ENCODE measurements at regions of chr1 and their contacts with region 1.

Region 1: DNA sequence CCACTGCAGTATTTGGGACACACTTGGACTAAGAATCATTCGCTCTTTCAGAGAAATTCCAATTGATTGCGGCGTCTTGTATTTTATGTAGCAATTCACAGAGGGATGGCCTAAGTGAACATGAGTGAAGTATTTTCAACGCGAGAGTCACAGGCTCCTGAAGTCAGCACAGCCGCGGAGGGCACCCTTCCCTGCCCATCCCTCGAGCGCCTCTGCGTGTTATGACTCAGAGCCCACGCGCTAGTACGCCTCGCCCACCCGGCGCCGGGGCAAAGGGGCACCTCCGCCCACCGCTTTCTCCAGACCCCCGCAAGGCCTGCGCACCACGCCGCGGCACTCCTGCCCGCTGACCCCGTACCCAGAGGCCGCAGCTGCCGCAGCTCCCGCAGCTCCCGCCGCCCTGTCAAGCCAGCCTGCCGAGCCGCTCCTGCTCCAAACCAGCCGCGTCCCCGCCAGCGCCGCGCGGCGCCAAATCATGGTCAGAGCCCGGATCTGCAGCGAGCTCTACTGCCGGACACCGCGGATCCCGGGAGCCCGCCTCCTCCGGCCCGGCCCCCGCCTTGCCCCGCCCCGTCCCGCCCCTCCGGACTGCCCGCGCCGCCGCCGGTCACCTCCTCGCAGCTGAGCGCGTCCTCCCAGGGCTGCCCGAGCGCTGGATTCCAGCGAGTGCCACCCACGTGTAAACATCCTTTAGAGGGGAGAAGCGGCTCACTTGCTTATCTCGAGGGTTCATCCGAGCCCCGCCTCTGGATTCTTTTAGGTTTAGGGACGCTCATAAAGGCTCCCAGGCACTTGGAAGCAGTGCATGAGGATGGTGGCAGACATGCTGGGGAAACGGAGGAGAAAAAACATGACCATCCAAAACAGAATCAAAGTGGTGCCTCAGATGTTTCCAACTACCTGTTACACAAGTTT is at the start of gene GLRX2:
- DNase-seq: peak; percentile 82 to 89 (median 86)
- H3K4me3 ChIP-seq: peak within 1 kb of the TSS; percentile 74
- H3K27ac ChIP-seq: peak within 1 kb of the TSS; percentile 70 to 88
- H3K4me1 ChIP-seq: peaks cover 2% of the 10 kb centered on the region
- H3K27me3 ChIP-seq: no peaks in the 10 kb centered on the region
- CTCF ChIP-seq: peak in 2 of 3 donors; percentile 15 to 24
- EP300 ChIP-seq: no peak
- POLR2A ChIP-seq: peak; percentile 29
- total RNA-seq, gene GLRX2: 3.2 to 14.6 (median 9.1) TPM

Region 2: GRCh38 chr1:191206513-191207207 is 1898.5 kb before region 1 on chr1:
- intact Hi-C with region 1: no loop called
- DNase-seq: no peak
- H3K4me3 ChIP-seq: no peak overlapping the region
- H3K27ac ChIP-seq: no peak overlapping the region
- H3K4me1 ChIP-seq: no peaks in the 10 kb centered on the region
- H3K27me3 ChIP-seq: no peaks in the 10 kb centered on the region
- CTCF ChIP-seq: no peak
- EP300 ChIP-seq: no peak
- POLR2A ChIP-seq: no peak

Region 3: GRCh38 chr1:192660613-192661012 is 444.6 kb before region 1 on chr1:
- intact Hi-C with region 1: no loop called
- DNase-seq: no peak
- H3K4me3 ChIP-seq: no peak overlapping the region
- H3K27ac ChIP-seq: no peak overlapping the region
- H3K4me1 ChIP-seq: no peaks in the 10 kb centered on the region
- H3K27me3 ChIP-seq: peaks cover 2% of the 10 kb centered on the region
- CTCF ChIP-seq: no peak
- EP300 ChIP-seq: no peak
- POLR2A ChIP-seq: no peak

Region 4: GRCh38 chr1:192983349-192983980 is 121.7 kb before region 1 on chr1:
- intact Hi-C with region 1: no loop called
- DNase-seq: no peak
- H3K4me3 ChIP-seq: no peak overlapping the region
- H3K27ac ChIP-seq: no peak overlapping the region
- H3K4me1 ChIP-seq: no peaks in the 10 kb centered on the region
- H3K27me3 ChIP-seq: no peaks in the 10 kb centered on the region
- CTCF ChIP-seq: no peak
- EP300 ChIP-seq: no peak
- POLR2A ChIP-seq: no peak

Region 5: DNA sequence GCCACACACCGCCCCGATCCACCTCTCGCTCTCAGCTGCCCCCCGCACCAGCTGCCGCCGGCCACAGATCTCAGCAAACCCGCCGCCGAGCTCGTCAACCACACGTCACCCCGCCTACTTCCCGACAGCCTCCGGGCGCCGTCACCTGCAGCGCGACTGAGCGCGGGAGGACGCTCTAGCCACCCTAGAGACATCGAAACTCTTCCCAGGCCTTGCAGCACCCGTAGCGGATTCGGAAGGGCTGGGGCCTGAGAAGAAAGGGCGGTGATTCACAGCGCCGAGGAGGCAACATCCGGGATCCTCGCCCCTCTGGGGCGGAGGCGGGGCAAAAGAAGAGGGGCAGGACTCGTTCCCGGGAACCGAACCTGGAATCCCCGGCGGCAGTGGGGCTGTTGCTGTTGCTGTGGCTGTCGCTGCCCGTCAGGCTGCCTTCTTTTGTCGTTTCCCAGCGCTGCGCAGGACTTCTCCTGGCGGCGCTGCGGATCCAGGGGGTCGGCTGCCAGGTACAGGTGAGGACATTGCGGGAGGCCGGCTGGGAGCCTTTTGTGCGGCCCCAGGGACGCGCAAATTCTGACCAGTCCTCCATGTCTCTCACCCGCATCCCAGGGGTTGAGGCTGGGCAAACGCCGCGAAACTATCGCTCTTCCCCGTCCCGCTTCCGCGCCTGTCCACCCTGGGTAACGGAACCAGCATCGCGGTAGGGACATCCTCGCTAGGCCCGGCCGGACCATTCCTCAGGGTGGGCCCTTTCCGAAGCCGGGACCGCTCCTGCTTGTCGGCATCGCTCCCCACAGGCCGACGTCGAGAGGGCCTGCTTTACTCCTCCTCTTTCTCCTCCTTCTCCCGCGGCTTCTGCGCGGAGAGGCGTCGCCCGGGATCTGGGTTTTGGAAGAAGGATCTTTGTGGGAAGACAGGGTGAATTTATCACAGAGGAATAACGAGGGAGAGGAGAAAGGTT is 45.6 kb before region 1 on chr1 and contains the starts of genes RO60 and UCHL5:
- intact Hi-C with region 1: loop called in 1 of 4 experiments (anchors 10 kb)
- DNase-seq: peak; percentile 95 to 96 (median 96)
- H3K4me3 ChIP-seq: peak within 1 kb of the TSS; percentile 58
- H3K27ac ChIP-seq: peak within 1 kb of the TSS; percentile 81 to 96
- H3K4me1 ChIP-seq: peaks cover 6% of the 10 kb centered on the region
- H3K27me3 ChIP-seq: no peaks in the 10 kb centered on the region
- CTCF ChIP-seq: peak in 1 of 3 donors; percentile 12
- EP300 ChIP-seq: no peak
- POLR2A ChIP-seq: peak; percentile 81
- total RNA-seq, gene RO60: 85.7 to 114 (median 99.6) TPM
- total RNA-seq, gene UCHL5: 19.7 to 29.3 (median 23.6) TPM

Region 6: DNA sequence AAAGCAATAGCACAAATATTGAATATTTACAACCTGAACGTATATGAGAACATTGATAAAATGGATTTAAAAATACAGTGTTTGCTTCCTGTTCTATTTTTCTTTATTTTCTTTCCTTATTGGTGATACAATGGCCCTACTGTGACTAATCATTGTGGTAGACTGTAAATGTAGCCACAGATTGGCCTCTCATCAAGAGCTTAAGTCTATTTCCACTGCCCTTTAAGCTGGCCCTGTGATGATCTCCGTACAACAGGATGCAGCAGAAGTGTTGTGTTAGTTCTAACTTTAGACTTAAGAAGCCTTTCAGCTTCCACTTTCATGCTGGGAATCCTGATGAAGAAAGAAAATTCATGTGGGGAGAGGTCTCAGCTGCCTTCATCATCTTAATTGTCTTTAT is 366.8 kb after region 1 on chr1:
- intact Hi-C with region 1: no loop called
- DNase-seq: no peak
- H3K4me3 ChIP-seq: no peak overlapping the region
- H3K27ac ChIP-seq: no peak overlapping the region
- H3K4me1 ChIP-seq: no peaks in the 10 kb centered on the region
- H3K27me3 ChIP-seq: no peaks in the 10 kb centered on the region
- CTCF ChIP-seq: no peak
- EP300 ChIP-seq: no peak
- POLR2A ChIP-seq: no peak